Activated CD4-positive, alpha-beta T cell treated with anti-CD3 and anti-CD28 coated beads, Interleukin-2, amount 10 ng/mL, durations not matched to agents 24 days and 14 days (primary cell): ENCODE measurements at regions of chr14 and their contacts with region 1.

Region 1: DNA sequence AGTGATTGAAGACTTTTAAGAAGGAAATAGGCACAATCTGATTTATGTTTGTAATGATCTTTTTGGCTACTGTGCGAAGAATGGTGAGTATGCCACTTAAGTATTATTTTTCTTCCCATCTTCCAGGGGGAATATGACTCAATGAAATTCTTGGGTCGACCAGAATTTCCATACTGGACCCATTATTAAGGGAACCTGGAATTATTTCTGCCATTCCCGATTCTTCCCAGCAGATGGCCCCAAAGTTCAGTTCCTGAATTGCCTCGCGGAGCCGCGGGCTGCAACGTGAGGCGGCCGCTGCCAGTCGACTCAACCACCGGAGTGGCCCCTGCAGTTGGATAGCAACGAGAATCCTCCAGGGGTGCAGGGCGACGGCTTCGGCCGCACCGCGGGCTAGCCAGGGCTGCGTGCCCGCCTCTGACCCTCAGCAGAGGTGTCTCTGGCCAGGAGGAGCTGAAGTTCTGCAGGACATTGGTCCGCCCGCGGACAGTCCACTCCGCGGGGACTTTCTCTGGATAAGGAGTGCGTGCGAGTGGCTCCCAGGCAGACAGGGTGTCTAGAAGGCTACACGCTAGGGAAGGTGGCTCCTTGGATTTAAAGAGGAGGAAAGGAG is 628 bp upstream of the TSHR start:
- DNase-seq: peak; percentile 93
- H3K4me3 Mint-ChIP-seq: peak overlapping the region; percentile 91
- H3K27ac Mint-ChIP-seq: peak overlapping the region; percentile 68
- H3K4me1 Mint-ChIP-seq: peaks cover 45% of the 10 kb centered on the region
- H3K27me3 Mint-ChIP-seq: peaks cover 44% of the 10 kb centered on the region

Region 2: GRCh38 chr14:80941241-80942182 is 13.3 kb before region 1 on chr14 and contains the start of gene CEP128:
- intact Hi-C with region 1: loop called (anchors 1 kb)
- DNase-seq: peak; percentile 95
- H3K4me3 Mint-ChIP-seq: peak within 1 kb of the TSS; percentile 84
- H3K27ac Mint-ChIP-seq: peak within 1 kb of the TSS; percentile 85
- H3K4me1 Mint-ChIP-seq: peaks cover 27% of the 10 kb centered on the region
- H3K27me3 Mint-ChIP-seq: no peaks in the 10 kb centered on the region
- total RNA-seq, gene CEP128: 20.1 and 20.4 TPM in 2 replicates

Region 3: DNA sequence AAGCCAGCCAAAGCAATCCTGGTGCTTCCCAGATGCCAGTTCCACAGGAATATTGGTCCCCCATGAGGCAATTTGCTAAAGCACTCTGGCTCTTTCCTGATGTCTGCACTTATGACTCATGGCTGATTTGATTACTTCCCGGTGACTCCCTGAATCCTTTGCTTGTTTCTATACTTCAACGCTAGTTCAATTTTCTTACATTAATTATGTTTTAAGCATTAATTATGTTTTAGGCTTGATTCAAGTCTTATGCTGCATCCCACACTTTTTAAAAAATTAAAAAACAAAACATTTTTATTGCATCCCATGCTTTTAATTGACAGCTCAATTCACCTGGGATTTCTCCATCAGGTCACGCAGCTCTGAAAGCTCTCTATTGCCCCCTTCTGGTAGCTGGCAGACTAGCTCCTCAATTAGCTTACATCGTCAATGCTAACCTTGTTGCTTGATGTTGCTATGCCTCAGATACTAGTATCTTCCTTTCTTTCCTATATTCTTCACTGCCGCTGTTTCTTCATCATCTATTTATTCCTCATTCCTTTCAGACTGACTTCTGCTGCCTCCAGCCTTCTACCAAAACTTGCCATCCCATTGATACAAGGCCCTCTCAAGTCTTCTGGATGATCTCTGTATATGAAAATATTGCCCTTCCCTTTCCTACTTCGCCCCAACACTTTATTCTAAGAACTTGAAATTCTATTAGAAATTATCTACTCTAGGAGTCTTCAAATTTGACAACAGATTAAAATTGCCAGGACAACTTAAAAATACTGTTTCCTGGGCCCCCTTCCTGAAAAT is 32.6 kb after region 1 on chr14:
- intact Hi-C with region 1: loop called (anchors 1 kb)
- DNase-seq: peak; percentile 92
- H3K4me3 Mint-ChIP-seq: no peak overlapping the region
- H3K27ac Mint-ChIP-seq: no peak overlapping the region
- H3K4me1 Mint-ChIP-seq: peaks cover 8% of the 10 kb centered on the region
- H3K27me3 Mint-ChIP-seq: peaks cover 17% of the 10 kb centered on the region

Region 4: GRCh38 chr14:81093651-81094050 is 138.9 kb after region 1 on chr14:
- intact Hi-C with region 1: no loop called
- DNase-seq: no peak
- H3K4me3 Mint-ChIP-seq: no peak overlapping the region
- H3K27ac Mint-ChIP-seq: no peak overlapping the region
- H3K4me1 Mint-ChIP-seq: no peaks in the 10 kb centered on the region
- H3K27me3 Mint-ChIP-seq: no peaks in the 10 kb centered on the region

Region 5: DNA sequence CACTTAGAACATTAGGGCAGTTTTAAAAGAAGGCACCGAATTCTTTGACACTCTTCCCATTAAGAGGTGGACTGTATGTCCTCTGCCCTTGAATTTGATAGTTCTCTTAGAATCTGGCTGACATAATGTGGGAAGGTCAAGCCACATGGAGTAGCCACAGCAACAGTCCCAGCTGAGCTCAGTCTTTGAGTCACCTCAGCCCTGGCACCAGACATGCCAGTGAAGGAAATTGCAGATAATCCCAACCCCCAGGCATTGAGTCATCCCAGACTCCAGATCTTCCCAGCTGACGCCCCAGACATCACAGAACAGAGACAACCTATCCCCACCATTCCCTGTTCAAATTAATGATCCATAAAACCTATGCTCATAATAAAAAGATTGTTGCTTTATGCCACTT is 182.5 kb after region 1 on chr14:
- intact Hi-C with region 1: no loop called
- DNase-seq: no peak
- H3K4me3 Mint-ChIP-seq: no peak overlapping the region
- H3K27ac Mint-ChIP-seq: no peak overlapping the region
- H3K4me1 Mint-ChIP-seq: no peaks in the 10 kb centered on the region
- H3K27me3 Mint-ChIP-seq: peaks cover 3% of the 10 kb centered on the region

Region 6: DNA sequence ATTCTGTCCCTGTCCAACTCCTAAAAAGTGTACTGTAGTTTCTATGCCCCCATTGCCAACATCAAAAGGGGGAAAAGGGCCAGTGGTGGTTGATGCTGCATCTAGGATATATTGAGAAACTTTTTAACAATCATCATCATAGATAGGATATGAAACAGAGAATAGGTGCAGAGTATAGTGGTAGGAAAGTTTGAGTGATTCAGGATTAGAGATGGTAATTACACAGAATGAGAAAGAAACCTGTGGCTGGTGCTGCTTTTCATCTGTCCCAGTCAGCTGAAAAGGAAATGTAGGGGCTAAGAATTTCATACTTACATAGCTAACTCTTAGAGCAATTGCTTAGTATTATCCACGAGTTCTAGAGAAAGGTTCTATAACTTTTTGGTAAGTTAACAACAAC is 198.4 kb after region 1 on chr14:
- intact Hi-C with region 1: loop called (anchors 1 kb)
- DNase-seq: no peak
- H3K4me3 Mint-ChIP-seq: no peak overlapping the region
- H3K27ac Mint-ChIP-seq: peak overlapping the region; percentile 54
- H3K4me1 Mint-ChIP-seq: peaks cover 5% of the 10 kb centered on the region
- H3K27me3 Mint-ChIP-seq: peaks cover 4% of the 10 kb centered on the region